PC-9 (cell line): ENCODE measurements at regions of chr10 and their contacts with region 1.

Region 1: DNA sequence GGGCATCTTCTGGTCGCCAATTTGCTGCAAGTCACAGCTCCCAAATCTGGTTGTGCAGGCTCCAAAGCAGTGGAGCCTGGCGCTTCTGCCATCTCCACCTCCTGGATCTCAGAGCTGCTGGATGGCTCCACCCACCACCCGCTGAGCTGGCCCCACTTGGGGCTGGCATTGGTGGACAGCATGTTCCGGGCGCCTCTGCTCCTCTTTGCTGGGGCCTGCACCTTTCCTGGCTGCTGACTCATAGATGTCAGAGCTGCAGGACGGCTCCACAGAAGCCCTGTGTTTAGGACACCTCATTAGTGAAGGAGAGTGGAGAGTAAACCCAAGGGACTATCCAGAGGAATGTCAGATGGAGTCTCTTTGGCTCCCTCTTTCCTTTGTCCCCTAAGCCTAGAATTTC is 27.4 kb downstream of the MAPK8 start:
- DNase-seq: peak in 1 of 2 experiments; percentile 86
- H3K4me3 ChIP-seq: no peak overlapping the region
- H3K27ac ChIP-seq: no peak overlapping the region
- H3K4me1 ChIP-seq: peaks cover 30% of the 10 kb centered on the region
- H3K27me3 ChIP-seq: no peaks in the 10 kb centered on the region
- CTCF ChIP-seq: no peak

Region 2: GRCh38 chr10:47458466-47459154 is 875.2 kb before region 1 on chr10:
- CTCF ChIA-PET with region 1: interaction called, 17 read pairs
- POLR2A ChIA-PET with region 1: no interaction called
- intact Hi-C with region 1: no loop called
- DNase-seq: peak; percentile 39 to 92
- H3K4me3 ChIP-seq: no peak overlapping the region
- H3K27ac ChIP-seq: peak overlapping the region; percentile 72
- H3K4me1 ChIP-seq: peaks cover 33% of the 10 kb centered on the region
- H3K27me3 ChIP-seq: no peaks in the 10 kb centered on the region
- CTCF ChIP-seq: peak; percentile 45

Region 3: GRCh38 chr10:48215488-48216204 is 118.2 kb before region 1 on chr10:
- CTCF ChIA-PET with region 1: no interaction called
- POLR2A ChIA-PET with region 1: no interaction called
- intact Hi-C with region 1: loop called (anchors 2 kb)
- DNase-seq: peak; percentile 54 to 76
- H3K4me3 ChIP-seq: no peak overlapping the region
- H3K27ac ChIP-seq: no peak overlapping the region
- H3K4me1 ChIP-seq: no peaks in the 10 kb centered on the region
- H3K27me3 ChIP-seq: peaks cover 37% of the 10 kb centered on the region; the same call in 1 of the 2 replicates
- CTCF ChIP-seq: peak; percentile 94

Region 4: DNA sequence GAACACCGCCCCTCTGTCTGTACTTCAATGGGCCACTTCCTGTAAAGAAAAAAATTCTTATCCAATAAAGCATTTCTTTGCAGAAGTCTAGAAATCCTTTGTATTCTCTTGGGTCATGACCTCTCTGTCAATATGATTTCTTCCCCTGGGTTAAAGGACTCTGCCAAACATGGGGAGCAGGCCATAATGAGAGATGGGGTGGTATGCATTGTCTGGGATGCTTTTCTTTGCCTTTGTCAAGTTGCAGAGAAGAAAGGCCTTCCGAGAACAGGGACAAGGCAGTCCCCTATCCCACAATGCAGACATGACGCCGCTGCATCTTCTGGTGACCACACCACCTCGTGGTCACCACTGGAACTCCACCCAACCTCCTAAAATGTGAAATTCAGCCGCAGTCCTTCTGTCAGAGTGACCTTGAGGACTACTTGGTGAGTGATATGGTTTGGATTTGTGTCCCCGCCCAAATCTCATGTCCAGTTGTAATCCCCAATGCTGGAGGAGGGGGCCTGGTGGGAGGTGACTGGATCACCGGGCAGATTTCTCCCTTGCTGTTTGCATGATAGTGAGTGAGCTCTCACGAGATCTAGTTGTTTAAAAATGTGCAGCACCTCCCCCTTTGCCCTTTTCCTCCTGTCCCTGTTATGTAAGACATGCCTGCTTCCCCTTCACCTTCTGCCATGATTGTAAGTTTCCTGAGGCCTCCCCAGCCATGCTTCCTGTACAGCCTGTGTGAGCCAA is 44.2 kb before region 1 on chr10:
- CTCF ChIA-PET with region 1: interaction called, 3 read pairs
- POLR2A ChIA-PET with region 1: no interaction called
- intact Hi-C with region 1: loop called (anchors 2 kb)
- DNase-seq: peak; percentile 50 to 65
- H3K4me3 ChIP-seq: no peak overlapping the region
- H3K27ac ChIP-seq: no peak overlapping the region
- H3K4me1 ChIP-seq: peaks cover 15% of the 10 kb centered on the region
- H3K27me3 ChIP-seq: peaks cover 20% of the 10 kb centered on the region
- CTCF ChIP-seq: peak; percentile 94

Region 5: DNA sequence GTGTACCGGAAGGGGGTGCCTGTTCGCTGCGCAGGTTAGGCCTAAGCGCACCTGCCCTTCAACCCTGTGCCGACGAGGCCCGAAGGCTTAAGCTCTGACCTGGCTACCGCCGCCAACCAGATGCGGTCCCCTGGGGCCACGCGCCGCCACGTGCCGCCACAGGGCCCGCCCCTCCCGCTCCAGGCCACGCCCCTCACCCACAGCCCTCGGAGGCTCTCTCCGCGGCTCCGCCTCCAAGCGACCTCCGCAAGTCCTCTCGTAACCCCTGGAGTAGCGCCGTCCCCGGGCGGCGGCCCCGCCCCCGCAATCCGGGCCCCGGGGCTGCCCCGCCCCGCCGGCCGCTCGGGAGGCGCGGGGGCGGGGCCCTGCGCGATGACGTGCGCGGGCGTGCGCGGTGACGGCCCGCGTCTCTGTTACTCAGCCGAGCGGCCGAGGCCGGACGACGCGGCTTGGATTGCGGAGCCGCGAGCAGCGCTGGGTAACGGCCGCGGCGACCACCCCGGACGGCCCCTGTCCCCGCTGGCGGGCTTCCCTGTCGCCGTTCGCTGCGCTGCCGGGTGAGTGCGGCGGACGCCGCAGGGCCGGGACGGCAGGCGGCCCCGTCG is 27.5 kb before region 1 on chr10 and contains the start of gene MAPK8:
- CTCF ChIA-PET with region 1: interaction called, 7 read pairs
- POLR2A ChIA-PET with region 1: interaction called, 4 read pairs
- intact Hi-C with region 1: loop called (anchors 1 kb)
- DNase-seq: peak; percentile 77 to 96
- H3K4me3 ChIP-seq: peak within 1 kb of the TSS; percentile 85
- H3K27ac ChIP-seq: peak within 1 kb of the TSS; percentile 14; the same call in 1 of the 2 replicates
- H3K4me1 ChIP-seq: peaks cover 45% of the 10 kb centered on the region
- H3K27me3 ChIP-seq: no peaks in the 10 kb centered on the region
- CTCF ChIP-seq: no peak
- total RNA-seq, gene MAPK8: 67.5 and 72.1 TPM in 2 replicates

Region 6: DNA sequence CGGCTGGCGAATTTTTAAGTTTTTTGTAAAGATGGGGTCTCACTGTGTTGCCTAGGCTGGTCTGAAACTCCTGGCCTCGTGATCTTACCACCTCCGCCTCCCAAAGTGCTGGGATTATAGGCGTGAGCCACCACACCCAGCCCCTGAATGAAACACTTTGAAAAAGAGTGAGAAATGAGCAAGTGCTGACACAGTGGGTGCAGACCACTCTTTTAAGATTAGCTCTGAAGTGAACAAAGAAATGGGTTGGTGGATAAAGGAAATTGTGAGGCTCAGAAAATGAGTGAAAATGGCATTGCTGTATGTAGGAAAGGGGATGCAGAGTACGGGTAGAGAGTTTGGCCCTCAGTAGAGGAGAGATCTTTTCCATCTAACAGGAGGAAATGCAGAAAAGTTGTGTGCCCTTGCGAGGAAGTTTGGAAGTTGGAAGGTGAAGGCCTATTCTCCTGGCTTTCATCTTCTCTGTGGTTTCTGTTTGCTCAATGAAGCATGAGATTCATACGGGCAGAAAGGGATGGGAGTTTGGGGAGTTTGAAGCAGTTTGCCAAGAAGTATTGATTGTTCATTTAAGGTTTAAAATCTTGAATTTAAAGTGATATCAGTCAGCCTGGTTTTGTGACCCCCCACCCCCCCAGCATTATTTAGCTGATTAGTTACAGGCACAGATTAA is 16.4 kb before region 1 on chr10:
- CTCF ChIA-PET with region 1: no interaction called
- POLR2A ChIA-PET with region 1: interaction called, 5 read pairs
- intact Hi-C with region 1: loop called (anchors 2 kb)
- DNase-seq: no peak
- H3K4me3 ChIP-seq: no peak overlapping the region
- H3K27ac ChIP-seq: no peak overlapping the region
- H3K4me1 ChIP-seq: peaks cover 34% of the 10 kb centered on the region
- H3K27me3 ChIP-seq: no peaks in the 10 kb centered on the region
- CTCF ChIP-seq: no peak

Region 7: DNA sequence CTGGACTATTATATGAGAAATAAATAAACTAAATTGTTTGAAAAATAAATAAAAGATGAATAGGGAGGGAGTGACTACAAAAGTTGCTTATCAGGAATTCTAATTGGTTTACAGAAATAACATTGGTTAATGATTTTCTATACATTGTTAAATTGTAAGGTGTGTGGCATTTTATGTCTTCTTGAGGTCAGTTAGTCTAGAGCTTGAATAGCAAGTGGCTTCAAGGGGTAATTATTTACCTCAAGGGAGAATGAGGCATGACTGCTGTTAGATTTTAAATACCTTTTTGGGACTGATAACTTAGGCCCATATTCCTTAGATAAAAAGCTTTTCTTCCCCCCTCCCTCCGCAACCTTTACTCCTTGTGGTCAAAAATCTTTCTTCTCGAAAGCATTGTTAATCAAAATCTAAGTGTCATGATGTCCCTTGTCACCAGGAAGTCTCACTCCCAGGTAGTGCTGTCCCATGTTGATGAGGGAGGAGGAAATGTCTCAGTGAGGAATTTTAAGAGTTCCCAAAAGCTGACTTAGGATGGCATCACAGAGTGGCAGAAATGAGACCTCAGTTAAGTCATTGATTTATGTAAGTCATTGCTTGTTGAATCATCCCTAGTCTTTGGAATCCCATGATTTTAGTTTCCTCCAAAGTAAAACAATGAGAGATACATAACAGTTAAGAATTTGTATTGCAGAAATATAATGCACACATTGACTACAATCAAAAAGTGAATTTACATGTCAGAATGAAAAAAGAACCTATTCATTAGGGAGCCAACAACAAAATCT is 44.1 kb after region 1 on chr10:
- CTCF ChIA-PET with region 1: no interaction called
- POLR2A ChIA-PET with region 1: no interaction called
- intact Hi-C with region 1: no loop called
- DNase-seq: no peak
- H3K4me3 ChIP-seq: no peak overlapping the region
- H3K27ac ChIP-seq: no peak overlapping the region
- H3K4me1 ChIP-seq: no peaks in the 10 kb centered on the region
- H3K27me3 ChIP-seq: no peaks in the 10 kb centered on the region
- CTCF ChIP-seq: no peak

Region 8: GRCh38 chr10:48634198-48634983 is 300.5 kb after region 1 on chr10:
- CTCF ChIA-PET with region 1: no interaction called
- POLR2A ChIA-PET with region 1: no interaction called
- intact Hi-C with region 1: no loop called
- DNase-seq: no peak
- H3K4me3 ChIP-seq: no peak overlapping the region
- H3K27ac ChIP-seq: no peak overlapping the region
- H3K4me1 ChIP-seq: no peaks in the 10 kb centered on the region
- H3K27me3 ChIP-seq: no peaks in the 10 kb centered on the region
- CTCF ChIP-seq: no peak